Activated naive CD4-positive, alpha-beta T cell treated with anti-CD3 and anti-CD28 coated beads, Interleukin-2, amount 10 ng/mL, durations not matched to agents 7 days and 5 days (primary cell): ENCODE measurements at regions of chr6 and their contacts with region 1.

Region 1: GRCh38 chr6:137341681-137342195 is 122.6 kb upstream of the IFNGR1 start:
- DNase-seq: peak; percentile 64
- H3K4me3 Mint-ChIP-seq: peak overlapping the region; percentile 35
- H3K27ac Mint-ChIP-seq: peak overlapping the region; percentile 14
- H3K4me1 Mint-ChIP-seq: peaks cover 25% of the 10 kb centered on the region
- H3K27me3 Mint-ChIP-seq: peaks cover 19% of the 10 kb centered on the region

Region 2: DNA sequence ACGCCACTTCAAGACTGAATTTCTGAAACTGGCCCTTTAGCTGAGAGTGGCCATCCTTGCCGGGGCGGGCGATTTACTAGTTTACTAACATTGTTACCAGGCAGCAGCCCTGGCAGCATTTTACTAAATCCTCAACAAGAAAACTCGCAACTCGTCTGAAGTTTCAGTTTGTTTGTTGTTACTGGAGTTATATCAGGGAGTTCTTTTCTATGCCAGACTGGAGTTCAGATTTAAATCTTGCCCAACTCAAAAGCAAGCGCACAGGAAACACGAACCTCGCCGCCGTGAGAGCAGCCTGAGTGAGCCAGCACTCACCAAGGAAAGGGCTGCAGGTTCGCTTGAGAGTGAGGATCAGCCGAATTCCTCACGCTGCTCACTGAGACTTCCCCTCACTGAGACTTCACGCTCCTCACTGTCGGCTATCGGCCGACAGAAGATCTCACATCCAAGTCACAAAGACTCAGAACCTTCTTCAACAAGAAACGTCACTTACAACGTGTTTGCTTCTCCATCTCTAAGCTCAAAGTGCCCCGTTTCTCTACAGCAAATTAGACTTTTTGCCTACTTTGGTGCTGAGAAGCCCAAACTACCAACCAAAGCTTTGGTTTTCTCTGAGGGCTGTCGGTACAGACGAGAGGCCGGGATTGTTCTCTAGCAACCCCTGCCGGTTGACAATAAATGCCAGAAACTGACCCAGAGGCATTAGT is 73.5 kb after region 1 on chr6:
- CTCF ChIA-PET with region 1: interaction called, 13 read pairs
- DNase-seq: peak; percentile 78
- H3K4me3 Mint-ChIP-seq: peak overlapping the region; percentile 70
- H3K27ac Mint-ChIP-seq: peak overlapping the region; percentile 74
- H3K4me1 Mint-ChIP-seq: peaks cover 12% of the 10 kb centered on the region
- H3K27me3 Mint-ChIP-seq: peaks cover 8% of the 10 kb centered on the region

Region 3: DNA sequence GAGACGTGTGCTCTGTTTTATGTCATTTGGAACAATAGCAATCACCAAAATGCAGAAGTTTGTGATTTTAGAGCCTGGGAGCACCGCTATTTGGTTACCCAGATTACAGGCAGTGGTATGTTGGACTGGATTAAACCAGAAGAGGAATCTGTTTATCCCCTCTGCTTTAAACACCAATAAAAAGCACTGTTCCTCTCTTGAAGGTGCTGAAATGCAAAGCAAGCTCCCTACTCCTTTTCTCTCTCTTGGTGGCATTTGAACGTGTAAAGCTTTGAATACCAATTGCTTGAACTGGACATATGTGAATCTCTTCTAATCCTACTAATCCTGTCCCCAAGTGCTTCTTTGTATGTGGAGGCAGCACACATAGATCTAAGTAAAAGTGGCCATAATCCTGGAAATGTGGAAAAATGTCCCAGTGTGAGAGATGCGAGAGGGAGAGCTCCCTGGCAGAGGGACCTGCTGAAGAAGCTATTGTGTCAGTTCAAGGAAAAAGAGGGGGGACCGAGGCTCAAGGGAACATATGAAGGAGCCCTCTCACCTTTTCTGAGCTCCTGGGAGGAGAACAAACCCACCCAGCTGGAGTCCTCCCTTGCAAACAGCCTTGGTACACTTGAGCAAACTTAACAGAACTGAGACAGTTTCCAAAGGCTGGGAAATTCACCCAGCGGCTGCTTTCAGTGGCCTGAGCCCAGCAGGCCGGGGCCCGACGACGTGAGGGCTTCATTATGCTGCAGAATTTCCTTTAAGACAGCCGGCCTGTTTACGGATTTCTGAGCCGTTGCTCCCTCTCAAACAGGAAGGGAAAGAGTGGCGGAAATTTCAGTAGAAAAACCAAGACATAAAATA is 171.2 kb after region 1 on chr6:
- CTCF ChIA-PET with region 1: no interaction called
- DNase-seq: no peak
- H3K4me3 Mint-ChIP-seq: no peak overlapping the region
- H3K27ac Mint-ChIP-seq: no peak overlapping the region
- H3K4me1 Mint-ChIP-seq: no peaks in the 10 kb centered on the region
- H3K27me3 Mint-ChIP-seq: peaks cover 66% of the 10 kb centered on the region